Vagina (tissue), 2 donors: ENCODE measurements at regions of chr1 and their contacts with region 1.

Region 1: GRCh38 chr1:183922197-183922596 is 115.3 kb downstream of the COLGALT2 start:
- DNase-seq: no peak
- H3K4me3 ChIP-seq: no peak overlapping the region
- H3K27ac ChIP-seq: no peak overlapping the region
- H3K4me1 ChIP-seq: no peaks in the 10 kb centered on the region
- H3K27me3 ChIP-seq: no peaks in the 10 kb centered on the region
- CTCF ChIP-seq: no peak
- POLR2A ChIP-seq: no peak

Region 2: DNA sequence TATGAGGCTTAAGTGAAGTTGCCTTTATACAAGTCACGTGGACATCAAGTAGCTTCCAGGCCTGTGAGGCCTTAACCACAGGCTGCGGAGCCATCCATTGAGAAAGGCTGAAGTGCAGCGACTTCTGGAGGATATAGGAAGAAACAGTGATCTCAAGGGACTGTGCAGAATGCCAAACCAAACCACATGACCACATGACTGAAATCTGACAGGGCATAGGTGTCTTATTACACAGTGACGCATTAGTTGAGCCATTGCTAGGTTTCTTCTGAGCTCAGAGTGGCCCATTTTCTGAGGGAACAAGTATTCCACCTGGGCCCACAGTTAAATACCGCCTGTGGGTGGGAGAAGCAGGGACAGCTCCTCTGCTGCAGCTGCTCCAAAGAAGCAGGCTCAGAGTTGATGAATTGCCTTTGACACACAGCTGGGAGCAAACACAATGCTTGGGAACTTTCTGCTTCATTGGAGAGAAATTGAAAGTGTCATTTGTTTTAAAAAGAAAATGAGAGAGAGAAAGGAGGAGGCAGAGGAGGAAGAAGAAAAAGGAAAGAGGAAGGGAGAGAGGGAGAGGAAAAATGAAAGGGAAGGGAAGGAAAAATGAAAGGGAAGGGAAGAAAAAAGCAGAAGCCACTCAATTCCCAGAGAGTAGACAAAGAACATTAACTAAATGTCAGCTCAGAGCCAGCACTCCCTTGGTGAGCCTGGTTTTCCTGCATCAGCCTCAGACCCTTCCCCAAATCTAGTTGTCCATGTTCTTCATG is 20.9 kb after region 1 on chr1:
- intact Hi-C with region 1: no loop called
- DNase-seq: no peak
- H3K4me3 ChIP-seq: no peak overlapping the region
- H3K27ac ChIP-seq: no peak overlapping the region
- H3K4me1 ChIP-seq: no peaks in the 10 kb centered on the region
- H3K27me3 ChIP-seq: no peaks in the 10 kb centered on the region
- CTCF ChIP-seq: no peak
- POLR2A ChIP-seq: no peak

Region 3: GRCh38 chr1:184691719-184692324 is 769.6 kb after region 1 on chr1:
- intact Hi-C with region 1: loop called (anchors 10 kb)
- DNase-seq: no peak
- H3K4me3 ChIP-seq: no peak overlapping the region
- H3K27ac ChIP-seq: no peak overlapping the region
- H3K4me1 ChIP-seq: no peaks in the 10 kb centered on the region
- H3K27me3 ChIP-seq: no peaks in the 10 kb centered on the region
- CTCF ChIP-seq: peak; percentile 22 to 63 (median 51)
- POLR2A ChIP-seq: no peak